ENCODE measurements at regions of chr16 and their contacts with region 1.

Region 1: GRCh38 chr16:12881740-12882139 is 19.7 kb upstream of the SHISA9 start:
- DNase-seq: peak in 1 of 2 experiments; percentile 48
- H3K4me3 ChIP-seq: no peak overlapping the region
- H3K27ac ChIP-seq: peak overlapping the region; percentile 95
- H3K4me1 ChIP-seq: peaks cover 50% of the 10 kb centered on the region
- H3K27me3 ChIP-seq: no peaks in the 10 kb centered on the region
- CTCF ChIP-seq: no peak

Region 2: DNA sequence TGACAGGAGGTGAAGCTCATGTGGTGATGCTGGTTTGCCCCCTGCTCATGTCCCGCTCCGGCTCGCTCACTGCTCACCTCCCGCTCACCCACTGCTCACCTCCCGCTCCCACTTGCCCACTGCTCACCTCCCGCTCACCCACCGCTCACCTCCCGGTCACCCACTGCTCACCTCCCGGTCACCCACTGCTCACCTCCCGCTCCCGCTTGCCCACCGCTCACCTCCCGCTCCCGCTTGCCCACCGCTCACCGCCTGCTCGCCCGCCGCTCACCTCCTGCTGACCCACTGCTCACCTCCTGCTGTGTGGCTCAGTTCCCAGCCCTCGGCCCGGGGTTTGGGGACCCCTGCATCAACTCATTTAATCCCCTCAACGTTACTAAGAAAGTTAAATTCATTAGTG is 19.4 kb before region 1 on chr16:
- CTCF ChIA-PET with region 1: no interaction called
- POLR2A ChIA-PET with region 1: interaction called, 24 read pairs
- intact Hi-C with region 1: no loop called
- DNase-seq: no peak
- H3K4me3 ChIP-seq: no peak overlapping the region
- H3K27ac ChIP-seq: no peak overlapping the region
- H3K4me1 ChIP-seq: peaks cover 21% of the 10 kb centered on the region
- H3K27me3 ChIP-seq: no peaks in the 10 kb centered on the region
- CTCF ChIP-seq: no peak